ENCODE measurements at regions of chr2 and their contacts with region 1.

Region 1: DNA sequence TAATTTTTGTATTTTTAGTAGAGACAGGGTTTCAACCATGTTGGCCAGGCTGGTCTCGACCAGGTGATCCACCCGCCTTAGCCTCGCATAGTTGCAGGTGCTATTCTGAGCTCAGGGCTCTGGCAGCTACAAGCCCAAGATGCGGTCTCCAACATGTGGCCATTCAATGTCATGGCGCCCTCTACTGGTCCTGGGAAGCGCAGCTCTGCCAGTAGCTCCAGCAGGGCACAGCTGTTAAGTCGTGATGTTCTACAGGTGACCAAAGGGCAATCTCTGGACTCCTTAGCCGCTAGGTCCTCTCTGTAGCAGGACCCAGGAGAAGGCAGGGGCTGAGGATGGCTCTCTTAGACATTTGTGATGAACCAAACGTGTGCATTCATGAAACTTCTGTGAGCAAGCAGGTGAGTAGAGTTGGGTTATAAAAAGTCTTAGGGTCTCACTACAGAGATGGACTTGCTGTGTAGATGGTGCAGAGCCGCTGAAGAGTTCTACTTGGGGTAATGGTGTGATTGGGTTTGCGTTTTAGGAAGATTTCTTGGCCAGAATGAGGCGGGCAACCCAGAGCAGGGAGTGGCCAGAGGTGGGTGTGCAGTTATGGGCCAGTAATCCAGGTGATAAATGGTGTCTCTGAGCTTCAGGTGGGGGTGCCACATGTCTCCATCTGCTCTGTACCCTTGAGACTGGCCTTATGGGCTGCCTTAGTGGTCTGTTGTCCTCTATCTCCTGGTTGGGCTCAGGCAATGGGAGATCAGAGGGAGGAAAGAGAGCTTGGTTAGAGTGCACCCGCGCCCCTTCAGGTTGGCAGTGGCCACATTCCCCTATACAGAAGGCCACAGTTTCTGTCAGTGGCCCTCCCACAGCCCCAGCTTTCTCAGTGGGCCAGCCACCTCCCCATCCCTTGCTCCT is 31.0 kb downstream of the IL37 start:
- DNase-seq: peak; percentile 89
- H3K4me3 Mint-ChIP-seq: no peak overlapping the region
- H3K27ac Mint-ChIP-seq: no peak overlapping the region
- H3K4me1 Mint-ChIP-seq: peaks cover 11% of the 10 kb centered on the region
- H3K27me3 Mint-ChIP-seq: no peaks in the 10 kb centered on the region
- CTCF ChIP-seq: peak; percentile 92

Region 2: GRCh38 chr2:112726497-112727190 is 215.4 kb before region 1 on chr2:
- CTCF ChIA-PET with region 1: interaction called, 31 read pairs
- POLR2A ChIA-PET with region 1: no interaction called
- intact Hi-C with region 1: no loop called
- DNase-seq: peak; percentile 94
- H3K4me3 Mint-ChIP-seq: no peak overlapping the region
- H3K27ac Mint-ChIP-seq: no peak overlapping the region
- H3K4me1 Mint-ChIP-seq: no peaks in the 10 kb centered on the region
- H3K27me3 Mint-ChIP-seq: no peaks in the 10 kb centered on the region
- CTCF ChIP-seq: peak; percentile 98

Region 3: GRCh38 chr2:112749755-112750559 is 192.0 kb before region 1 on chr2:
- CTCF ChIA-PET with region 1: interaction called, 268 read pairs
- POLR2A ChIA-PET with region 1: interaction called, 34 read pairs
- intact Hi-C with region 1: loop called (anchors 1 kb)
- DNase-seq: peak; percentile 70
- H3K4me3 Mint-ChIP-seq: no peak overlapping the region
- H3K27ac Mint-ChIP-seq: peak overlapping the region; percentile 74
- H3K4me1 Mint-ChIP-seq: peaks cover 23% of the 10 kb centered on the region
- H3K27me3 Mint-ChIP-seq: no peaks in the 10 kb centered on the region
- CTCF ChIP-seq: peak; percentile 86

Region 4: DNA sequence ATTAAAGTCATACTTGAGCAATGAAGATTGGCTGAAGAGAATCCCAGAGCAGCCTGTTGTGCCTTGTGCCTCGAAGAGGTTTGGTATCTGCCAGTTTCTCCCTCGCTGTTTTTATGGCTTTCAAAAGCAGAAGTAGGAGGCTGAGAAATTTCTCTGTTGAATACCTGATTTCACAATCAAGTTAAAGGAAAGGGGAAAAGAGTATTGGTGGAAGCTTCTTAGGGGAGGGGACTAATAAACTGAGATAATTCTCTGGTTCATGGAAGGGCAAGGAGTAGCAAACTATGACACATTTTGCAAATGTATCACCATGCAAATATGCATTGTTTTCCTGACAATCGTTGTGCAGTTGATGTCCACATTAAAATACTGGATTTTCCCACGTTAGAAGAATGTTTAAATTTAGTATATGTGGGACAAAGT is 105.3 kb before region 1 on chr2 and contains the start of gene IL1B:
- CTCF ChIA-PET with region 1: interaction called, 11 read pairs
- POLR2A ChIA-PET with region 1: interaction called, 3 read pairs
- intact Hi-C with region 1: no loop called
- DNase-seq: peak; percentile 87
- H3K4me3 Mint-ChIP-seq: peak within 1 kb of the TSS; percentile 46
- H3K27ac Mint-ChIP-seq: peak within 1 kb of the TSS; percentile 60
- H3K4me1 Mint-ChIP-seq: peaks cover 50% of the 10 kb centered on the region
- H3K27me3 Mint-ChIP-seq: no peaks in the 10 kb centered on the region
- CTCF ChIP-seq: no peak
- total RNA-seq, gene IL1B: 5.4 and 5.5 TPM in 2 replicates

Region 5: DNA sequence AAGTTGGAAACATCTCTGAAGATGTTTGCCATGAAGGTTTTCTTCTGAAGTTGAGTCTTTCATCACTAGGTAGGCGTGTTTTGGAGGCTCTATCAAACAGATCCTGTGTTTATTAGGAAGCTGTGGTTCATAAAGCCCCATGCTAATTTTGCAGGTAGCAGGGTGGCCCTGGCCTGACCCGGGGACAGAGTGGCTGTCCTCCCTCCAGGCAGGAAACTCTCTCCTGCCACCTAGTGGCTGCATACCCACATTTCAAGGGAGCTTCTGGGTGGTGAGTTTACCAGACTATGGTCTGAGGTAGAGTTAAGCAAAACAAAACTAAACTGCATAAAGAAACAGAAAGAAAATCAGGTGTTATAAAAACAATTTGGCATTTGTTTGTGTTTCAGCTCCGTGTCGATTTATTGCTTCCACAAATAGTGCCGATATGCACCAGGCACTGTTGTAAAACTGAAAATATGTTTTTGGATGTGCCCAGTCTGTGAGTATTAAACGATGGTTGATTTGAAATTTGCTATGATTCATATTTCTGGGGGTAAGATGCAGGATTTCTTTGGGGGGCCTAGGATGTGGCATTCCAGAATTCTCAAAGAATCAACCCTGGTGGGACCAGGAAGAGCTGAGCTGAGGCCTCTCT is 57.0 kb before region 1 on chr2:
- CTCF ChIA-PET with region 1: interaction called, 39 read pairs
- POLR2A ChIA-PET with region 1: interaction called, 6 read pairs
- intact Hi-C with region 1: loop called (anchors 1 kb)
- DNase-seq: peak; percentile 61
- H3K4me3 Mint-ChIP-seq: no peak overlapping the region
- H3K27ac Mint-ChIP-seq: no peak overlapping the region
- H3K4me1 Mint-ChIP-seq: peaks cover 19% of the 10 kb centered on the region
- H3K27me3 Mint-ChIP-seq: no peaks in the 10 kb centered on the region
- CTCF ChIP-seq: peak; percentile 96

Region 6: GRCh38 chr2:112902816-112903215 is 39.2 kb before region 1 on chr2:
- CTCF ChIA-PET with region 1: interaction called, 23 read pairs
- POLR2A ChIA-PET with region 1: no interaction called
- intact Hi-C with region 1: no loop called
- DNase-seq: no peak
- H3K4me3 Mint-ChIP-seq: no peak overlapping the region
- H3K27ac Mint-ChIP-seq: no peak overlapping the region
- H3K4me1 Mint-ChIP-seq: peaks cover 5% of the 10 kb centered on the region
- H3K27me3 Mint-ChIP-seq: no peaks in the 10 kb centered on the region
- CTCF ChIP-seq: no peak

Region 7: DNA sequence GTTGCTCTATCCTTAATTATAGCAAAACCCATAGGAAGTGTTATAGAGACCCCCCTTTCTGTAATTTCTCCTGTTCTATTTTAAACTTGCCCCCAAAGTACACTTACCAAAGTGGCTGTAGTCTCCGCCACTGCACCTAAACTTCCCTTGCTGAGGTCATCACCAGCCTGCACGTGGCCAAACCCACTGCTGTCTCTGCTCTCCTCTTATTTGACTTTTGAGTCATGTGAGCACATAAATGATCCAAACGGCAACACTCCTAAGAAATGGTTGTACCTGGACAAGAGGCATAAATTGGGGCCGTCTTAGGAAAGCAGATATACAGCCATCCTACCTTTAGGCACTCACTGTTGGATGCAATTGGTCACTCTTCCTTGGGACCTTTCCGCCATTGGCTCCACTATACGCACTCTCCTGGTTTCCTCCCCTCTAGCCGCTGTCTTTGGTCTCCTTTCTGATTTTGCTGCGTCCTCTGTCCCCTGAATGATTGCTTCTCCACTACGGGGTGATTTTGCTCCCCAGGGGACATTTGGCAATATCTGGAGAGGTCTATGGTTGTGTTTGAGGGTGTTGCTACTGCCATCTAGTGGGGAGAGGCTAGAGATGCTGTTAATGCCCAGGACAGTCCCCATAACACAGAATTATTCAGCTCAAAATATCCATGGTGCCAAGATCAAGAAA is 16.6 kb after region 1 on chr2:
- CTCF ChIA-PET with region 1: interaction called, 36 read pairs
- POLR2A ChIA-PET with region 1: interaction called, 4 read pairs
- intact Hi-C with region 1: no loop called
- DNase-seq: peak; percentile 85
- H3K4me3 Mint-ChIP-seq: no peak overlapping the region
- H3K27ac Mint-ChIP-seq: no peak overlapping the region
- H3K4me1 Mint-ChIP-seq: no peaks in the 10 kb centered on the region
- H3K27me3 Mint-ChIP-seq: no peaks in the 10 kb centered on the region
- CTCF ChIP-seq: peak; percentile 69

Region 8: DNA sequence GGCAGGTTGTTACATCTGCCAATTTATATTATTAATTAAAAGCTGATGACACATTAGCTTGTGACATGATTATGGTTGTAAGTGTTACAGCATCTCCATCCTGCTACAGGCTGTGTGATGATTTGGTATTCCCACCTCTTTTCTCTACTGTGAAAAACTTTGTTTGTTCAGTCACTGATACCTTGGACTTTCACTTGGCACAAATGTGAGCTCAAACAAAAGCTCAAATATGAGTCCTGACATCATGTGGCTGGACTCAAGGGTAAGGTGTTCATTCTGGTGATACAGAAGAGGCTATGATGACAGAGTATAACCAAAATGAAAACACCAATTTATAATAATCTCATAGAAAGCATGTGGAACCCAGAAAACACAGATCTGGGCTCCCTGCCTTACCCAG is 51.8 kb after region 1 on chr2:
- CTCF ChIA-PET with region 1: no interaction called
- POLR2A ChIA-PET with region 1: no interaction called
- intact Hi-C with region 1: no loop called
- DNase-seq: no peak
- H3K4me3 Mint-ChIP-seq: no peak overlapping the region
- H3K27ac Mint-ChIP-seq: no peak overlapping the region
- H3K4me1 Mint-ChIP-seq: no peaks in the 10 kb centered on the region
- H3K27me3 Mint-ChIP-seq: peaks cover 19% of the 10 kb centered on the region
- CTCF ChIP-seq: no peak

Region 9: DNA sequence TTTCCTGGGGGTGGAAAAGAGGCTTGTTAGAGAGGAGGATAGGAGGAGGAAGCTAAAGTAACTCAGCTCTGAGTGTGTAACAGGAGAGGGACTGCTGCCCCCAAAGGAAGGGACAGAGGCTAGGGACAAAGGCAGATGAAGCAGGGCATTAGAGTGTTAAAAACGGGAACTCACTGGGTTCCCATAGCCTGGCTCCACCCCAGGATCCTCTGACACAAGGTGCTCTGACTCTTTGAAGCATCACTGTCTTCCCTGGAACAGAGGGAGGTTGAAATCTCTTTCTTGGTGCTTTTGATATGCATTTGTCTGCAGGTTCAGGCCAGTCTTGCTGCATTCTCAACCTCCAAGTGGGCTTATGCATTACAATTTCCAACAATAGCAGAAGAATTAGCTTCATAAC is 86.1 kb after region 1 on chr2:
- CTCF ChIA-PET with region 1: no interaction called
- POLR2A ChIA-PET with region 1: no interaction called
- intact Hi-C with region 1: no loop called
- DNase-seq: no peak
- H3K4me3 Mint-ChIP-seq: no peak overlapping the region
- H3K27ac Mint-ChIP-seq: no peak overlapping the region
- H3K4me1 Mint-ChIP-seq: no peaks in the 10 kb centered on the region
- H3K27me3 Mint-ChIP-seq: peaks cover 99% of the 10 kb centered on the region
- CTCF ChIP-seq: no peak

Measured in MCF 10A (cell line).